Activated T-helper 2 cell treated with anti-CD3 and anti-CD28 coated beads, Interferon-gamma antibody, Interleukin-2, Interleukin-4, amounts not matched to agents 10 μg/mL and 5 μg/mL and 100 μg/mL, durations not matched to agents 14 hours and 24 hours and 36 hours (primary cell): ENCODE measurements at regions of chr5 and their contacts with region 1.

Region 1: DNA sequence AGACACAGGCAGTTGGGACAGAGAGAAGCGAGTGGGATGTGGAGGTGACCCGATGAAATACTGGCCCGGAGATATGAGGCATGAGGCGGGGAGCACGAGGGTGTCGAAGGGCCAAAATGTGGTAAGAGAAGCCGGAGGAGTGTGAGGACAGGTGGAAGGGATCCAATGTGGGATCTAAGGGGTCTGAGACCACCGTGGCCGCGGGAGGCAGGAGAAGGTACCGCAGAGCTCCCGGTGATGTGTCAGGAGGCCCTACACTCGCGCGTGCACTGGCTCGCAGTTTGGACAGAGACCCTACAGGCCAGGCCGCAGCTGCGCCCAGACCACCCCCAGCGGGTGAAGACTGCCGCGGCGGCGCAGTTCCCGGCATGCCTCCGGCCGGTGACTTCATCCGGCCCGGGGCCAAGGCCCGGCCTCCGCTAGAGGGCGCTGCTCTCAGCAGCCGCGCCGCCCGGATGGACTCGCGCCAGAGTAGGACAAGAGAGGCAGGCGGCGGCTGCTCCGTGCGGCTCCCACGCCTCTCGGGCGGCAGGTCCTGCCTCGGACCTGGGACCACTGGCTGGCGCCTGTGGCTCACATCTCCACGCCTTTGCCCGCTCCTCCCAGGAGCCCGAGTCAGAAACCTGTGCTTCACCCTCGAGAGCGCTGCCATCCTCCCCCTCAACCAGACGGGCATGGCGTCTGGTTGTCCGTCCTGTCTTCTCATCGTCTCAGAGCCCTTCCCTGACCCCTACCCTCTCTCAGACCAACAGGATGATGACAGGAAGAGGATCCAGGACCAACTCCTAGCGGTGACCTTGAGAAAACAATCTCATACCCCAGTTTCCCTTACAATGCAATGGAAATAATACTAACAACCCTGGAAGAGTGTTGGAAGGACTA is 35.4 kb upstream of the STING1 start:
- DNase-seq: peak; percentile 85
- H3K4me3 Mint-ChIP-seq: peak overlapping the region; percentile 79
- H3K27ac Mint-ChIP-seq: peak overlapping the region; percentile 88
- H3K4me1 Mint-ChIP-seq: peaks cover 23% of the 10 kb centered on the region
- H3K27me3 Mint-ChIP-seq: no peaks in the 10 kb centered on the region

Region 2: DNA sequence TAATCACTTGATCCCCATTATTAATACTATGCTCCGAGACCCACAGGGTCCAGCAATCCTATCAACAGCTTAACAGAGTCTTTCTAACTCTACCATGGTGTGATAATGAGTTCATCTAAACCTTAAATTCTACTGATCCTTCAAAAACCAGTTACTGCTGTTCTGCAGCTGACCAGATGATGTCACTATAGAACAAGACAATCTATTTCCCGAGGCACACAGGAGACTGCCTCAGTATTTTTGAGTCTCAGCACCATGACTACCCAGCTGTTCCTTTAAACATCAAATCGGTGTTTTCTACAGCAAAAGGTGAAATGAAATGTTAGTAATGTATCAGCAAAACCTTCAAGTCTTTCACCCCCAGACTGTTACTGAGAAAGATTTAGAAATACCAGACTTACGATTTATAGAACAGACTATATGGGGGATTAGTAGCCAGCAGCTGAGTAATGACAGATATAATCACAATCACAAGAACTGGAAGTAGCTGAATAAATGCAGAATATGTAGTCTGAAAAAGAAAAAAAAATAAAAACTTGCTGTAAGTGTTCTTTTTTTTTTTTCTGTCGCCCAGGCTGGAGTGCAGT is 95.5 kb before region 1 on chr5:
- intact Hi-C with region 1: loop called (anchors 1 kb)
- DNase-seq: peak; percentile 53
- H3K4me3 Mint-ChIP-seq: no peak overlapping the region
- H3K27ac Mint-ChIP-seq: peak overlapping the region; percentile 58
- H3K4me1 Mint-ChIP-seq: peaks cover 22% of the 10 kb centered on the region
- H3K27me3 Mint-ChIP-seq: no peaks in the 10 kb centered on the region

Region 3: DNA sequence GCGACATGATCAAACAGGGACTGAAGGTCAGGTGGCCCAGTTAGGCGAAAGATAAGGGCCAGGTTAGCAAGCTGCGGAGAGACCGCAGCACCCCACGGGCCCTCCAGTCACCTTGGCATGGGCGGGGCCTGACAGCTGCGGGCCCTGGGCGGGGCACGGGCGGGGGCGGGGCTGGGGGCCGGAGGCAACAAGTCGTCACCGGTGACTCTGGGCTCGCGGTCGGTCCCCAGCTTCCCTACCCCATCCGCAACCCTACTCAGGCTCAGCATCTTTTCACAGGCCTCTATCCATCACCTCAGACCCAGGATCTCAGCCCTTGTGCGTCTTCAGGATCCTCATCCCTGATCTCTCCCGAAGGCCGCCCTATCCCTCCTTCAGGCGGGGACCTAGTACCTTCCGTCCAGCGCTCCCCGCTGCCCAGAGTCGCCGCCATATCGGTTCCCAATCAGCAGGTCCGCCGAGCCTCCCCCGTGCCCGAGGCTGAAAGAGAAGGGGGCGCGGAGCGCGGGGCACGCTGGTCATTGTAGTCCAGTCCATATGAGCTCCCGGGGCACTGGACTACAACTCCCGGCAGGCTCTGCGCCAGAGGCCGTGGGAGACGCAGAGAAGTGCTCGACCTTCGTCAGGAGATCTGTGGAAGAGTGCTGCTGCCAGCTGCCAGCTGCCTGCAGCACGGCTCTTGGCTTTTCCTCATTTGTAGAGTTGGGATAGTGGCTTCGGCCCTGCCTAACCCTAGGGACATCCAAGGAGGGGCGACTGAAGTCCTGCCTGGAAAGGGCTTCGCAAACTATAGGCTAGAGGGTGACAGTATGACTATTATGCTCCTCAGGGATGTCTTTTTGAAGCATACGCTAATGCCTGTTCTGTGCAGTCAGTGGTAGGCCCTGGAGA is 78.7 kb before region 1 on chr5 and contains the start of gene DNAJC18:
- intact Hi-C with region 1: loop called (anchors 5 kb)
- DNase-seq: peak; percentile 84
- H3K4me3 Mint-ChIP-seq: peak within 1 kb of the TSS; percentile 93
- H3K27ac Mint-ChIP-seq: peak within 1 kb of the TSS; percentile 98
- H3K4me1 Mint-ChIP-seq: peaks cover 58% of the 10 kb centered on the region
- H3K27me3 Mint-ChIP-seq: no peaks in the 10 kb centered on the region
- total RNA-seq, gene DNAJC18: 29.8 and 35.8 TPM in 2 replicates

Region 4: DNA sequence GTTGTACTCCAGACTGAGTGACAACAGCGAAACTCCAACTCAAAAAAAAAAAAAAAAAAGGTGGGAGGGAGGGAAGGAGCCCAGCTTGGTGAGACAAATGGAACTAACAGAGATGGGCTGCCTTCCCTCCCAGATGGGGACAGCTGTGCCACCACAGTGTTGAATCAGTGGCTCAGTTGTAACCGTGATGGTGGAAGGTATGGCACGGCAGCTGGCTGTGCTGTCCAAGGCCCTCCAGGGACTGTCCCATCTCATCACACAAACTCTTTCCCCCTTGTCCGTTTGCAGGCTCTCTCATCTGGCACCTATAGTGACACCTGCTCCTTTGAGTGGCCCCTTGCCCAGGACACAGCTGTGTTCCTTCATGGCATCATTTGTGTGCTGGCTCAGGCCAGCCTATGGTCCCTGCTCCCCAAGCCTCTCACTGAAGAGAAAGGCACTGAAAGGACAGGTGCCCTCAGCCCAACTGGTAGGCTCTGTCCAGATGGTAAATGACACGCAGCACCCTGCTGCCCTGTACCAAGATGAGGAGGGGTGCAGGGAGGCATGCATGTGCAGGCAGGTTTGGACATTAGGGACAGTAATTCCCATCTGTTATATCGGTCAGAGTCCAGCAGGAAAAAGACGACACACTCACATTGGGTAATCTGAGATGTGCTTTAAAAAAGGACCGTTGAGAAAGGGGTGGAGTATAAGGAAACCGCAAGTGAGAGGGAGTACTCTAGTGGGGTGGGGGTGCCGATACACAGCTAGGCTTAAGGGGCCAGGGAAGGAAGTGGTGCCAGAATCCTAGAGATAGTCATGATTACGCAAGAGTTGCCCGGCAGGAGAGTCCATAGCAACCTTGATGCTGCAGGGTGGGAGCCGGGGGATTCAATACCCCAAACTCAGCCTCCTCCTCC is 42.8 kb before region 1 on chr5:
- intact Hi-C with region 1: loop called (anchors 5 kb)
- DNase-seq: no peak
- H3K4me3 Mint-ChIP-seq: peak overlapping the region; percentile 44
- H3K27ac Mint-ChIP-seq: peak overlapping the region; percentile 81
- H3K4me1 Mint-ChIP-seq: peaks cover 61% of the 10 kb centered on the region
- H3K27me3 Mint-ChIP-seq: no peaks in the 10 kb centered on the region

Region 5: DNA sequence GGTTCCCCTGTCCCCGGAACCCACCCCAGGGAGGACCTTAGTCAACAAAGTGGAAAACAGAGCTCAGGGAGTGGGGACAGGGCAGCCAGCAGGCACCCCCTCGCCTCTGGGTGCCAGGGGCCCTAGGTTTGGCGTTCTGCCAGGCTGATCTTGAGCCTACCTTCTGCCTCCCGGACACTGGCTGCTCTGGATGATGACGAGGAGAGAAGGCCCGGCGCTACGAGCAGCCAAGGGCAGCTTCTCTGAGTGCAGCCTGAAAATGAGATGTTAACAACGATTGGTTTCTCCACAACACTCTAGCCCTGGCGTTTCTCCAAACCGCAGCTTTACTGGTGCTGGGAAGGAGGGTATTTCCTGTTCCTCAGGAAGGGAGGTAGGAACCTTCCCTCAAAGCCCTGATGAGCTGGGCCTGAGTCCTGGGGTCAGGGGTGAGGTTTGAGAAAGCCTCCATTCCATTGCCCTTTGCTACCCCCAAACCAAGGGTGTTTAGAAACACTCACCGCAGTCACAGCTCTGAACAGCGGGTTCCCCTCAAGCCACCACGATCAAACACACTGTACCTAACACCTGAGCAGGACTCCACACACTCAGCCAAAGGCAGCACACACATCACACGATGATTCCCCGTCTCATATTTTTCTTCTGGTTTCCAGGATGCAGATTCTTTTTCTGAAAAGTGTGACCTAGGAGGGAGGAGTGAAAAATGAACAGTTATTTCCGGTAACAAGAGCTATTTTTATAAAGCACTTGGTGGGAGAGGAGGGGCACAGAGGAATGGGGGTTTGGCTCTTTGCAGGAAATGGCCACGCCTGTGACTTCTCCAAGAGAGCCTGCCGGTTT is 35.7 kb before region 1 on chr5 and contains the start of gene STING1:
- intact Hi-C with region 1: loop called (anchors 1 kb)
- DNase-seq: peak; percentile 55
- H3K4me3 Mint-ChIP-seq: peak within 1 kb of the TSS; percentile 88
- H3K27ac Mint-ChIP-seq: peak within 1 kb of the TSS; percentile 99
- H3K4me1 Mint-ChIP-seq: peaks cover 30% of the 10 kb centered on the region
- H3K27me3 Mint-ChIP-seq: no peaks in the 10 kb centered on the region
- total RNA-seq, gene STING1: 167 and 169 TPM in 2 replicates

Region 6: GRCh38 chr5:139745800-139746690 is 228.1 kb after region 1 on chr5:
- intact Hi-C with region 1: no loop called
- DNase-seq: no peak
- H3K4me3 Mint-ChIP-seq: peak overlapping the region; percentile 77
- H3K27ac Mint-ChIP-seq: no peak overlapping the region
- H3K4me1 Mint-ChIP-seq: peaks cover 16% of the 10 kb centered on the region
- H3K27me3 Mint-ChIP-seq: peaks cover 30% of the 10 kb centered on the region